ENCODE measurements at regions of chr19 and their contacts with region 1.

Region 1: DNA sequence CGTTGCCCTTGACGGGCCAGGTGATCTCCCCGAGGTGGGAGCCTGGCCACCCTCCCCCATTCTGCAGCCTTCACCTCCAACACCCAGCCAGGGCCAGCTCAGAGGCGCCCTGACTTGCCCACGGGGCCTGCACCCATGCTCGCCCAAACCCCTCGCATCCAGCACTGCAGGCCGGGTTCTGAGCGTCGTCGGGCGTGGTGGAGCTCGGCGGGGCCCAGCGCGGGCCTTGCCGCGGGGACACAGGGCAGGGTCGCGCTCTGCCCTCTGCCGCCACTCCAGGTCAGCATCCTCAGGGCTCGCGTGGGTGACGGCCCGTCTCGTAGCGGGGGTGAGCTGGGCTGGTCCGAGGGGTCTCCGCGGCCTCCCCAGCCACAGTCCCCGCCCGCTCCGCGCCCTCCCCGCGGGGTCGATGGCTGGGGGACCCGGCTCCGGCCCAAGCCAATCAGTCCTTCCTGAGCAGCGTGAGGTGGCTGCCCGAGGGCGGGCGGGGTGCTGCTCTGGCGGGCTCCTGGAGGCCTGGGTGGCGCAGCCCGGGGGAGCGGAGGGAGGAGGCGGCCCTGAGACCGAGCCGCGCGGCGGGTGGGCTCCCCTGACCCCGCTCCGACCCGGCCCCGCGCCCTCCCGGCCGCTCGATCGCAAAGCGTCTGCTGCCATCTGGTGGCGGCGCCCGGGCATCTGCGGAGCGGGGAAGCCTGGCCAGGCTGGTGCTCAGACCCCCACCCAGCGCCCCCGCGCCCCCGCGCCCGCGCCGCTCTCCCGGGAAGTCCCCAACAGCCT is 61.4 kb downstream of the CCNE1 start:
- DNase-seq: peak; percentile 59 to 81
- ATAC-seq: peak; percentile 65 to 91 (median 86)
- H3K4me3 ChIP-seq: no peak overlapping the region
- H3K4me3 Mint-ChIP-seq: peak overlapping the region; percentile 56
- H3K27ac ChIP-seq: no peak overlapping the region
- H3K27ac Mint-ChIP-seq: no peak overlapping the region
- H3K4me1 ChIP-seq: peaks cover 18% of the 10 kb centered on the region
- H3K4me1 Mint-ChIP-seq: peaks cover 0 to 6% of the 10 kb centered on the region in 2 donors
- H3K27me3 ChIP-seq: peaks cover 7% of the 10 kb centered on the region
- H3K27me3 Mint-ChIP-seq: peaks cover 30 to 44% of the 10 kb centered on the region in 2 donors
- CTCF ChIP-seq: peak; percentile 87

Region 2: GRCh38 chr19:29735800-29736199 is 137.4 kb before region 1 on chr19:
- intact Hi-C with region 1: loop called (anchors 1 kb)
- DNase-seq: no peak
- ATAC-seq: no peak
- H3K4me3 ChIP-seq: no peak overlapping the region
- H3K4me3 Mint-ChIP-seq: no peak overlapping the region
- H3K27ac ChIP-seq: no peak overlapping the region
- H3K27ac Mint-ChIP-seq: no peak overlapping the region
- H3K4me1 ChIP-seq: no peaks in the 10 kb centered on the region
- H3K4me1 Mint-ChIP-seq: no peaks in the 10 kb centered on the region
- H3K27me3 ChIP-seq: peaks cover 2% of the 10 kb centered on the region
- H3K27me3 Mint-ChIP-seq: peaks cover 11 to 13% of the 10 kb centered on the region in 2 donors
- CTCF ChIP-seq: no peak

Region 3: DNA sequence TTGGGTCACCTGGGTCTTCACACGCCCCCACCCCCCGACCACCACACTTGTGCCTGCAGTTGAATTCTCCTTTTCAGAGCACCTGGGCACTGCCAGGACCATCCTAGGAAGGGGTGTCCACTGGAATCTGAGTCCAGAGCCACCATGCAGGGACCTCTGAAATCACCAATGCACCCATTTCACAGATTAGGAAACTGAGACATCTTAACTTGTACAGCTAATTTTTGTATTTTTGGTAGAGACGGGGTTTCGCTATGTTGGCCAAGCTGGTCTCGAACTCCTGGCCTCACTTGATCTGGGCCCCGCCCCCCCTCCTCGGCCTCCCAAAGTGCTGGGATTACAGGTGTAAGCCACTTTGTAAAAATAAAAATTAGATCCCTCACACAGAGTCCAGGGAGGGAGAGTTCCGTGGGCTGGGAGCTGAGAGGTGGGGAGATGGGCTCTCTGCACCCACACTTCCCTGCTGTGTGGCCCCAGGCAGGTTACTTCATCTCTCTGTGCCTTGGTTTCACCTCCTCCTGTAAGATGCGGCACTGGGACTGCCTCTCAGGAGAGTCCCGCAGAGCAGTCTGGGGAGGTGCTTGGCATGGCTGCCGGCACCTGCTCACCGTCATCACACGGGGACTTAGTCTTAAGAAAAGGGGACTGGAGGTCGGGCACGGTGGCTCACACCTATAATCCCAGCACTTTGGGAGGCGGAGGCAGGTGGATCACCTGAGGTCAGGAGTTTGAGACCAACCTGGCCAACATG is 112.3 kb before region 1 on chr19:
- intact Hi-C with region 1: loop called (anchors 1 kb)
- DNase-seq: no peak
- ATAC-seq: no peak
- H3K4me3 ChIP-seq: no peak overlapping the region
- H3K4me3 Mint-ChIP-seq: no peak overlapping the region
- H3K27ac ChIP-seq: no peak overlapping the region
- H3K27ac Mint-ChIP-seq: no peak overlapping the region
- H3K4me1 ChIP-seq: peaks cover 4% of the 10 kb centered on the region
- H3K4me1 Mint-ChIP-seq: no peaks in the 10 kb centered on the region
- H3K27me3 ChIP-seq: no peaks in the 10 kb centered on the region
- H3K27me3 Mint-ChIP-seq: peaks cover under 1 to 3% of the 10 kb centered on the region in 2 donors
- CTCF ChIP-seq: no peak